Activated B cell treated with CpG ODN at 0.5 μM for 24 hours (primary cell): ENCODE measurements at regions of chr11 and their contacts with region 1.

Region 1: GRCh38 chr11:57667736-57668435 is at the start of gene ZDHHC5:
- DNase-seq: peak; percentile 97
- ATAC-seq: peak; percentile 80
- H3K4me3 Mint-ChIP-seq: peak within 1 kb of the TSS; percentile 89
- H3K27ac Mint-ChIP-seq: peak within 1 kb of the TSS; percentile 99
- H3K4me1 Mint-ChIP-seq: peaks cover 49% of the 10 kb centered on the region
- H3K27me3 Mint-ChIP-seq: no peaks in the 10 kb centered on the region
- CTCF ChIP-seq: no peak
- total RNA-seq, gene ZDHHC5: 50.9 and 60.7 TPM in 2 replicates

Region 2: GRCh38 chr11:57657194-57658022 is 10.5 kb before region 1 on chr11 and contains the start of gene CLP1:
- CTCF ChIA-PET with region 1: interaction called, 3 read pairs
- POLR2A ChIA-PET with region 1: interaction called, 14 read pairs
- intact Hi-C with region 1: loop called (anchors 1 kb)
- DNase-seq: peak; percentile 96
- ATAC-seq: peak; percentile 97
- H3K4me3 Mint-ChIP-seq: peak within 1 kb of the TSS; percentile 99
- H3K27ac Mint-ChIP-seq: peak within 1 kb of the TSS; percentile 94
- H3K4me1 Mint-ChIP-seq: peaks cover 23% of the 10 kb centered on the region
- H3K27me3 Mint-ChIP-seq: no peaks in the 10 kb centered on the region
- CTCF ChIP-seq: no peak
- total RNA-seq, gene CLP1: 20.4 and 20.9 TPM in 2 replicates

Region 3: DNA sequence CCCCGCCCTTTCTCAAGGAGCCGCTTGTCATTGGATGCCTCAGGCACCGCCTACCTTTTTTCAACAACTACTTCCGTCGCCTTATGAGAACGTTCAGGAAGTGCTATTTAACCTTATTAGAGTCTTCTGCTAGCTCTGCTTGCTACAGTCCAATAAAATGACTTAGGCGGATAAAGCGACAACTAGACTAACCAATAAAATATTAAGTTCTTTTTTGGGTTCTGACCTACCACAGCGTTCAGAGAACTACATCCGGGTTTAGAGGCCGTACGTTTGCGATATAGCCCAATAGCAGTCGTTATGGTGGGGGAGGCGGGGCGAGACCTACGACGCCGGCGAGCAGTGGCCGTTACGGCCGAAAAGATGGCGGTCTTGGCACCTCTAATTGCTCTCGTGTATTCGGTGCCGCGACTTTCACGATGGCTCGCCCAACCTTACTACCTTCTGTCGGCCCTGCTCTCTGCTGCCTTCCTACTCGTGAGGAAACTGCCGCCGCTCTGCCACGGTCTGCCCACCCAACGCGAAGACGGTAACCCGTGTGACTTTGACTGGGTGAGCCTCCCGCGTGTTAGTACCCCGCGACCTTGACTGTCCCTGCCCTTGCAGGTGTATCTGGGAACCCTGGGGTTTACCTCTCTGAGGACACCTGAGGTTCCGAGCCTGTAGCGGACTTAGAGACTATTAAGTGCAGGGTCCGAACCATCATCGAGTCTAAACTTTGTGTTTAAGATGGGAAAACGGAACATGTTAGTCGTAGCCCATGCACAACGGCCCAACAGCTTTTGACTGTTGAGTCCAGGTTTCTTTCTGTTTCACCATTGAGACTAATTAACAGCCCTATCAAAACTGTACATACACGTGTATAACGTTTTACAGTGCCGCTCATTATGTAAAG is 44.6 kb after region 1 on chr11 and contains the start of gene TMX2:
- CTCF ChIA-PET with region 1: no interaction called
- POLR2A ChIA-PET with region 1: interaction called, 9 read pairs
- intact Hi-C with region 1: loop called (anchors 1 kb)
- DNase-seq: peak; percentile 75
- ATAC-seq: peak; percentile 87
- H3K4me3 Mint-ChIP-seq: peak within 1 kb of the TSS; percentile 98
- H3K27ac Mint-ChIP-seq: peak within 1 kb of the TSS; percentile 96
- H3K4me1 Mint-ChIP-seq: peaks cover 47% of the 10 kb centered on the region
- H3K27me3 Mint-ChIP-seq: no peaks in the 10 kb centered on the region
- CTCF ChIP-seq: no peak
- total RNA-seq, gene TMX2: 53.2 and 53.3 TPM in 2 replicates

Region 4: GRCh38 chr11:57792060-57792541 is 124.2 kb after region 1 on chr11:
- CTCF ChIA-PET with region 1: no interaction called
- POLR2A ChIA-PET with region 1: interaction called, 16 read pairs
- intact Hi-C with region 1: loop called (anchors 1 kb)
- DNase-seq: peak; percentile 71
- ATAC-seq: peak; percentile 89
- H3K4me3 Mint-ChIP-seq: peak overlapping the region; percentile 75
- H3K27ac Mint-ChIP-seq: peak overlapping the region; percentile 90
- H3K4me1 Mint-ChIP-seq: peaks cover 73% of the 10 kb centered on the region
- H3K27me3 Mint-ChIP-seq: no peaks in the 10 kb centered on the region
- CTCF ChIP-seq: no peak

Region 5: GRCh38 chr11:59142530-59143507 is 1474.9 kb after region 1 on chr11 and contains the start of gene FAM111A:
- CTCF ChIA-PET with region 1: no interaction called
- POLR2A ChIA-PET with region 1: no interaction called
- intact Hi-C with region 1: loop called (anchors 2 kb)
- DNase-seq: peak; percentile 73
- ATAC-seq: peak; percentile 76
- H3K4me3 Mint-ChIP-seq: peak within 1 kb of the TSS; percentile 99
- H3K27ac Mint-ChIP-seq: peak within 1 kb of the TSS; percentile 99
- H3K4me1 Mint-ChIP-seq: peaks cover 71% of the 10 kb centered on the region
- H3K27me3 Mint-ChIP-seq: no peaks in the 10 kb centered on the region
- CTCF ChIP-seq: no peak
- total RNA-seq, gene FAM111A: 51.5 and 64.3 TPM in 2 replicates